Activated T-helper 1 cell treated with anti-CD3 and anti-CD28 coated beads, Interleukin-12 subunit alpha, Interleukin-12 subunit beta, Interleukin-2, Interleukin-4 antibody, amounts not matched to agents 30 ng/mL and 10 ng/mL and 1 ng/mL, durations not matched to agents 14 hours and 24 hours and 36 hours (primary cell): ENCODE measurements at regions of chr7 and their contacts with region 1.

Region 1: GRCh38 chr7:44123190-44124003 is at the start of gene POLD2:
- DNase-seq: peak; percentile 98
- H3K4me3 Mint-ChIP-seq: peak within 1 kb of the TSS; percentile 96
- H3K27ac Mint-ChIP-seq: peak within 1 kb of the TSS; percentile 90
- H3K4me1 Mint-ChIP-seq: peaks cover 31% of the 10 kb centered on the region
- H3K27me3 Mint-ChIP-seq: peaks cover 7% of the 10 kb centered on the region
- total RNA-seq, gene POLD2: 234 and 250 TPM in 2 replicates

Region 2: GRCh38 chr7:43869006-43869866 is 254.2 kb before region 1 on chr7 and contains the start of gene MRPS24:
- intact Hi-C with region 1: loop called (anchors 10 kb)
- DNase-seq: peak; percentile 88
- H3K4me3 Mint-ChIP-seq: peak within 1 kb of the TSS; percentile 85
- H3K27ac Mint-ChIP-seq: peak within 1 kb of the TSS; percentile 85
- H3K4me1 Mint-ChIP-seq: peaks cover 23% of the 10 kb centered on the region
- H3K27me3 Mint-ChIP-seq: no peaks in the 10 kb centered on the region
- total RNA-seq, gene MRPS24: 118 and 125 TPM in 2 replicates

Region 3: DNA sequence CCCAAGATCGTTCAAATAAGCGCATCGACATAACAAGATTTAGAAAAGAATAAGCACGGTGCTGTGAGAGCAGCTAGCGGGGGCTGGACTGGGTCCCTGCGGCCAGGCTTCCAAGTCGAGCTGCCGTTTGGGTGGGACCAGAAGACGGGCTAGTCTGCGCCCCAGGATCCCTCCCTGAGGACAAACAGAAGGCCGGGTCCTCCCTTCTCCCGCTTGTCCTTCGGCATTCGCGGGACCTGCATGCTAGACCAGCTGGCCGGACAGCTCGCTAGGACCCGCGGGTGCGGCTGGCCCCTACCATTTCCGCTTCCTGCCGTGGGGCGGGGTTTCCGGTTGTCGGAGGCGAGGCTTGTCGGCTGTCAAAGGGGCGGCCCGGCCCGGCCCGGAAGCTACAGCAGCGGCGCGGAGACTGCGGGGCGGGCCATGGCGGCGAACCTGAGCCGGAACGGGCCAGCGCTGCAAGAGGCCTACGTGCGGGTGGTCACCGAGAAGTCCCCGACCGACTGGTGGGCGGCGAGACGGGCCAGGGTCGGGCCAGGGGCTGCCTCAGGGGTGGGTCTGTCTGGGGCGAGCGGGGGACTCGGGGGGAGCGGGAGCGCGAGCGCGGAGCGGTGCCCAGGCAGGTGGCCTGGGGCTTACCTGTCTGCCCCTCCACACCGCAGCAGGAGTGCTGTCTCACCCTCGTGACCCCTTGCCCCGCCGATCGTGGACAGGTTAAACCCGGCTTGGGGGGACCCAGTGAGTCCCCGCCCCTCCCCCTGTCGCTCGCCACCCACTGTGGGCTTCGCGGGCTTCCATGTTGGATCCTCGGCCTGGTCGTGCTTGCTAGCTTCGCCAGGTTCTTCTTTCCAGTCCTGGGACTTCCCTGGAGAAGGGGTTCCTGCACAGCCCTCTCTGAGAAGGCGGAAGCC is 78.8 kb before region 1 on chr7 and contains the start of gene DBNL:
- intact Hi-C with region 1: loop called (anchors 2 kb)
- DNase-seq: peak; percentile 92
- H3K4me3 Mint-ChIP-seq: peak within 1 kb of the TSS; percentile 92
- H3K27ac Mint-ChIP-seq: peak within 1 kb of the TSS; percentile 87
- H3K4me1 Mint-ChIP-seq: peaks cover 44% of the 10 kb centered on the region
- H3K27me3 Mint-ChIP-seq: no peaks in the 10 kb centered on the region
- total RNA-seq, gene DBNL: 140 TPM in 2 replicates

Region 4: DNA sequence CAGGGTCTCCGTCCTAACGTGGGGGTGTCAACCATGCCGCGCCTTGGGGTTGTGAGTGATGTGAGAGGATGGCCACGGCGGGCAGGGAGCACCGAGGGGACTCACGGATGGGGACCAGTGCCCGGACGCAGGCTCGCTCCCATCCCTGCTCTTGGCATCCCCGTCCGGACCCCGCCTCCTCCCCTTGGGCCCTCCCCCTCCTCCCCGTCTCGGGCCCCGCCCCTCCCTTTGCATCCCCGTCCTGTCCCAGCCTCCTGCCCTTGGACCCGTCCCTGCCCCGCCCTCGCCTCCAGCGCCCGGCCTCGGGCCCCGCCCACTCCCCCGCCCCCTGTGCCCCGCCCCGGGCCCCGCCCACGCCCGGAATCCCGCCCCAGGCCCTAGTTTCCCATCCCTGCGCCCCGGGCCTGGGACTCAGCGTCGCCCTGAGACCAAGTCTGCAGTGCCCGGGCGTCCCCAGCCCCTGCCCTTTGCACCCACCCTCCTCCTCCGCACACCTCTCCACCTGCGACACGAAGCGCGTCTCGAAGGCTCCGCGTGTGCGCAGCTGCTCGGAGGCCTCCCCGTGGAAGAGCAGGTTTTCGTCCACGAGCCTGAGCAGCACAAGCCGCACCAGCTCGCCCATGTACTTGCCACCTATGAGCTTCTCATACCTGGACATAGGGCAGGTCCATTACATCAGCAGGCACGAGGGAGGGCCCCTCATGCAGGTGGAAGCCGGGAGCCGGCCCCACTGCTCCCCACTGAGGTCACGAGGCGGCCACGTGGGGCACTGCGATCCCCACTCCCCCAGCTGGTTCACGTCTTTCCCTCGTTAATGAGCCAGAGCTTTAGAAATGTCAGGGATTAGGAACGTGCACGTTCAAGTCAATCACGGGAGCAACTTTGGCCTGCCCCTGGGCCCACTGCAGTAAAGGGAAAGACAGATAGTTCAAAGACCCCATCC is 22.8 kb after region 1 on chr7:
- intact Hi-C with region 1: loop called (anchors 1 kb)
- DNase-seq: peak; percentile 70
- H3K4me3 Mint-ChIP-seq: peak overlapping the region; percentile 80
- H3K27ac Mint-ChIP-seq: no peak overlapping the region
- H3K4me1 Mint-ChIP-seq: peaks cover 6% of the 10 kb centered on the region
- H3K27me3 Mint-ChIP-seq: peaks cover 6% of the 10 kb centered on the region

Region 5: DNA sequence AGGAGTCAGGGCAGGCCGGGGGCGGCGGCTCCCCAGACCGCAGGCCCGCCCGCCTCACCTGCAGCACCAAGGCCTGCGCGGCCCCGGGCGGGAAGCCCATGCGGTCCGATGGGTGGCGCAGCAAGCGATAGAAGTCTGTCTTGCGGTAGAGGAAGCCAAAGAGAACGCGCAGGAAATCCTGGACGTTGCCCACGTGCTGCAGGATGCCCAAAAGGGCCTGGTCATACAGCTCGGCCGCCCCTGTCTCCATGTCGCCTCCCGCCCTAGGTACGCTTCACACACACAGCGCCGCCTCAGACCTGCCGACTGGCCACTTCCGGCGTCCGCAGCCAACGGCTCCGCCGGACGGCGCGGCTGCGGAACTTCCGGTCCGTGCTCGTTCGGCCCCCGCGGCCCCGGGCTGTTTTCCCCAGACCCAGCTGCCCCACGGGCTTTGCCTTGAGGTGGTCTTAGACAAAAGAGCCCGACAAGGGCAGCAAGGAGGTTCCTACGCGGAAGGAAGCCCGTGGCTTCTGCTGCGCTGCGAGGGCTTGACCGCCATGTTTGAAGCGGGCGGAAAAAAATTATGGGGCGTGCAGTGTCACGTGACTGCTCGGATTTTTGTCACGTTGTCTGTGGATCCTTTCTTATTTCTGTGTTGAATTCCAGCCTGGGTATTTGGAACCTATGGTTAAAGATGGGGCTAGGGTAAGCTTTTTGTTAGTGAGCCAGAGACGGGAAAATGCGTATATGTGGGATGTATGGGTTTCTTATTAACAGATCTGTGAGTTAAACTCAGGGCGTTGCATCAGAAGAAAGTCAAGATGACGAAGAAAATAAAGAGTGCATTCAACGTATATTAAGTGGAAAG is 367.2 kb after region 1 on chr7 and contains the start of gene NUDCD3:
- intact Hi-C with region 1: loop called (anchors 1 kb)
- DNase-seq: peak; percentile 73
- H3K4me3 Mint-ChIP-seq: peak within 1 kb of the TSS; percentile 88
- H3K27ac Mint-ChIP-seq: peak within 1 kb of the TSS; percentile 93
- H3K4me1 Mint-ChIP-seq: peaks cover 44% of the 10 kb centered on the region
- H3K27me3 Mint-ChIP-seq: no peaks in the 10 kb centered on the region
- total RNA-seq, gene NUDCD3: 77.9 and 83.1 TPM in 2 replicates